HEK293 (cell line): ENCODE measurements at regions of chr14 and their contacts with region 1.

Region 1: DNA sequence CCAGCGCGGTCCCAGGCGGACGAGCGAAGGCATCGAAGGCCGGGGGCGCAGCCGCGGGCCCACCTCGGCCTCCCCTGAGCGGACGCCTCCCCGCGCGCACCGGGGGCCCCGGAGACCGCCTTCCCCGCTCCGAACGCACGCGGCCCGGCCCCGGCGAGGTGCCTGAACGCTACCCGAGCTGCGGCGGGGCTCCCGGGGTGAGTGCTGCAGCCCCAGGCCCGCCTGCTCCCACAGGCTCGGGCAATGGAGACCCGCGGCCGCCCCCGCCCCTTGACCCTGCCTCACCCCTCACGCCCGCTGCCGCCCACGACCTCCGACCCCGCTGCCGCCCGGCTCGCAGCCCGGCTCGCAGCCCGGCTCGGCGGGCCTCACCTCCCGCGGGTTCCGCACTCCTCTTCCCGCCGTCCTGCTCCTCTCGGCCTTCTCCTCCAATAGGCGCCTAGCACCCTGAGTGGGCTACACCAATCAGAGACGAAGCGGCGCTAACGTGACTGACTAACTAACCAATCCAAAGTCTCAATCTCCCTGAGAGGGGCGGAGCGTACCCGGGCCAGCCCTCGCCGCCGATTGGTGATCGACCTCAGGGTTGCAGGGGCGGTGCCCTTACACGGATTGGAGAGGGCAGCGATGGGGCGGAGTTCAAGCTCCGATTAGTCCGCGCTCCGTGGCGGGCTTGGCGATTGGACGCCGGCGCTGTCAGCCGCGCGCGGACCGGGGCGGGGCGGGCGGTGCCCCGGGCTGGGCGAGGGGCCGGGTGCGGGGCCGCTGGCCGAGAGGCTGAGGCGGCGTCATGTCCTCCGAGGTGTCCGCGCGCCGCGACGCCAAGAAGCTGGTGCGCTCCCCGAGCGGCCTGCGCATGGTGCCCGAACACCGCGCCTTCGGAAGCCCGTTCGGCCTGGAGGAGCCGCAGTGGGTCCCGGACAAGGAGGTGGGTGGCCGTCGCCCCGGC is at the starts of genes XRCC3 and ZFYVE21:
- H3K4me3 ChIP-seq: peak within 1 kb of the TSS; percentile 87
- H3K27ac ChIP-seq: peak within 1 kb of the TSS; percentile 96
- H3K4me1 ChIP-seq: peaks cover 12% of the 10 kb centered on the region
- CTCF ChIP-seq: no peak

Region 2: GRCh38 chr14:103436533-103436932 is 278.8 kb before region 1 on chr14:
- CTCF ChIA-PET with region 1: no interaction called
- POLR2A ChIA-PET with region 1: no interaction called
- H3K4me3 ChIP-seq: no peak overlapping the region
- H3K27ac ChIP-seq: no peak overlapping the region
- H3K4me1 ChIP-seq: no peaks in the 10 kb centered on the region
- CTCF ChIP-seq: no peak

Region 3: GRCh38 chr14:103698574-103699254 is 16.6 kb before region 1 on chr14:
- CTCF ChIA-PET with region 1: interaction called, 5 read pairs
- POLR2A ChIA-PET with region 1: interaction called, 31 read pairs
- H3K4me3 ChIP-seq: no peak overlapping the region
- H3K27ac ChIP-seq: 0 out of 2 replicates have a peak overlapping the region, but pooled peaks have one; percentile 41
- H3K4me1 ChIP-seq: peaks cover 11% of the 10 kb centered on the region
- CTCF ChIP-seq: no peak

Region 4: DNA sequence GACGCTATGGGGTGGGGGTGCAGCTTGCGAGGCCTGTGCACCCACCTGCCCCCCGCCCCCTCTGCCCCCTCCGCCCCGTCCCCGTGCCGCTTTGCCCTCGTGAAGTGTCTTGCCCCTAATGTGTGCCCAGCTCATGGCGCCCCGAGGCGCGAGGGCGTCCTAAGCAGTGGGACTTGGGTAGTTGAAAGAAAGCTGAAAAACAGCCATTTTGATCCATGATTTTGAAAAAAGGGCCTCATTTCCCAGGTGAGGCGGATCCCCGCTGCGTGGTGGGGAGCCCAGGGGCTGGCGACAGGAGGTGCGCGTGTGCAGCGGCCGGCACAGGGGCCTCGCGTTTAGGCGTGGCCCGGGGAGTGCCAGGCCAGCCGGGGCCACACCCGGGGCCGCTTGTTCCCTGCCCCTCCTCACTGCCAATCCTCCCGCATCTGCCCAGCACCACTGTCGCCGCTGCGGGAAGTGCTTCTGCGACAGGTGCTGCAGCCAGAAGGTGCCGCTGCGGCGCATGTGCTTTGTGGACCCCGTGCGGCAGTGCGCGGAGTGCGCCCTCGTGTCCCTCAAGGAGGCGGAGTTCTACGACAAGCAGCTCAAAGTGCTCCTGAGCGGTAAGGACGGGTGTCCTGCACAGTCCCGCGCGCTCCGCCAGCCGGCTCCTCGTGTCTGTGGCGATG is 12.1 kb after region 1 on chr14:
- CTCF ChIA-PET with region 1: no interaction called
- POLR2A ChIA-PET with region 1: no interaction called
- H3K4me3 ChIP-seq: no peak overlapping the region
- H3K27ac ChIP-seq: no peak overlapping the region
- H3K4me1 ChIP-seq: no peaks in the 10 kb centered on the region
- CTCF ChIP-seq: no peak

Region 5: GRCh38 chr14:103782376-103782775 is 67.0 kb after region 1 on chr14:
- CTCF ChIA-PET with region 1: no interaction called
- POLR2A ChIA-PET with region 1: no interaction called
- H3K4me3 ChIP-seq: no peak overlapping the region
- H3K27ac ChIP-seq: no peak overlapping the region
- H3K4me1 ChIP-seq: no peaks in the 10 kb centered on the region
- CTCF ChIP-seq: no peak

Region 6: GRCh38 chr14:103819503-103820307 is 104.4 kb after region 1 on chr14:
- CTCF ChIA-PET with region 1: no interaction called
- POLR2A ChIA-PET with region 1: interaction called, 10 read pairs
- H3K4me3 ChIP-seq: no peak overlapping the region
- H3K27ac ChIP-seq: peak overlapping the region; percentile 76
- H3K4me1 ChIP-seq: peaks cover 39% of the 10 kb centered on the region
- CTCF ChIP-seq: no peak